ENCODE measurements at regions of chr13 and their contacts with region 1.

Region 1: DNA sequence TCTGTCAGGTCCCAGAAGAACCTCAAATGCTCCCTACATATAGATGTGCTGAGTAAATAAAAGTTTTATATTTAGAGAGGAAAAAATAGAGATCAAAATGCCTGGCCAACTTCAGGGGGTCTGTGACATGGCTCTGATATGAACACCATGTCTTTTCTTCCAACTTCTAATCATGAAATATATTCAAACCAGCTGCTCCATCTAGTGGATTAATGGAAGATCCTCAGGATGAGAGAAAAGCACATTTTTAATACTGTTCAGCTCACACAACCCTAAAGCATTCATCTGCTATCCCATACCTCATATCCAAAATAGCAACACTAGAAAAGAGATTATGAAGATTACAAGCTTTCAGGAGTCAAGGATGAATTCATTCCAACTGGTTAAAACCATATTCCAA is 56.0 kb upstream of the DOCK9 start:
- DNase-seq: peak in 1 of 2 experiments; percentile 30
- H3K4me3 ChIP-seq: no peak overlapping the region
- H3K4me3 Mint-ChIP-seq: peak overlapping the region; percentile 24
- H3K27ac Mint-ChIP-seq: peak overlapping the region; percentile 79
- H3K4me1 ChIP-seq: peaks cover 37% of the 10 kb centered on the region
- H3K4me1 Mint-ChIP-seq: peaks cover 29% of the 10 kb centered on the region
- H3K27me3 ChIP-seq: no peaks in the 10 kb centered on the region
- H3K27me3 Mint-ChIP-seq: no peaks in the 10 kb centered on the region
- CTCF ChIP-seq: peak; percentile 54 to 56

Region 2: DNA sequence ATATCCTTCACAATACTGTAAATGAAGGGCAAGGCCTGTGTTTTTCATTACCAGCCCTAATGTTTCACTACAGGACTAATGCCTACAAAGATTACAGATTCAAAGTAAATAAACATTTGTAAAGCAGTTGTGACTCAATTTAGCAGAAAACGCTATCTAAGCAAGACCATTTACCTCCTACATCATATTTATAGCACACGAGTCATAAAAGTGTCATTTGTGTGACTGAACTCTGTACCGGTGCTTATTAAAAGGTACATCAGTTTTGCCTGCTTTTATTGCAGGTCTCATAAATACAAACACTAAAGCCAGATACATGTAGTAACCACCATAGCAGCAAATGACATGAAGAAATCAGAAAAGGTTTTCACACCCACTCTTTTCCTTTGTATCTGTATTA is 219.8 kb before region 1 on chr13:
- CTCF ChIA-PET with region 1: no interaction called
- POLR2A ChIA-PET with region 1: no interaction called
- intact Hi-C with region 1: no loop called
- DNase-seq: no peak
- H3K4me3 ChIP-seq: no peak overlapping the region
- H3K4me3 Mint-ChIP-seq: no peak overlapping the region
- H3K27ac Mint-ChIP-seq: no peak overlapping the region
- H3K4me1 ChIP-seq: peaks cover 4% of the 10 kb centered on the region
- H3K4me1 Mint-ChIP-seq: no peaks in the 10 kb centered on the region
- H3K27me3 ChIP-seq: no peaks in the 10 kb centered on the region
- H3K27me3 Mint-ChIP-seq: no peaks in the 10 kb centered on the region
- CTCF ChIP-seq: no peak

Region 3: DNA sequence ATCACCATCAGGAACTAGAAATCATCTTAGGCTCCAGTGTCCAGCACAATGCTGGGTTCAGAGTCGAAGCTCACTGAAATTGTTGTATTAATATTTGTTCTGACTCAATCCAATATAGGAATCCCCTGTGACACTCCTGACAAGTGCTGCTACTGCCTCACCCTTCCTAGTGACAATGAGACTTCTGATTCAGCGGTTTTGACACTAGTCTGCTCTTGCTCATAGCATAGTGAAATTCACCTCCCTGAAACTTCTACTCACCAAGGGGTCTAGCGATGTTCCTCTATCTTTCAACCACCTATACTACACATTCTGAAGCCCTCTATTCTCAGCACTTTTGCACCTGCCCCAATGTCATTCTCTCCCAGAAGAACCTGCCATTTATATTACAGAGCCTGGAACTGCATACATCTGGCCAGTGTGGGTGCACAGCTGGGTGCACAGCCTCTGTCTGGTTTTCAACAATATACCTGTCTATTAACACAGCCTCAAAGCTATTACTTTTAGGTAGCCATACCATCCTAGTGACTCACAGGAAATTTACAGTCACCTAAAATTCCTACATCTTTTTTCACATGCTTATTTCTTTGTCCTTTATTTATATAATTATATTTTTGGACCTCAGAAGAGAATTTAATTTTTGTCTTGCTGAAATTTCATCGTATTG is 144.3 kb before region 1 on chr13:
- CTCF ChIA-PET with region 1: interaction called, 3 read pairs
- POLR2A ChIA-PET with region 1: no interaction called
- intact Hi-C with region 1: loop called (anchors 2 kb)
- DNase-seq: no peak
- H3K4me3 ChIP-seq: no peak overlapping the region
- H3K4me3 Mint-ChIP-seq: no peak overlapping the region
- H3K27ac Mint-ChIP-seq: no peak overlapping the region
- H3K4me1 ChIP-seq: no peaks in the 10 kb centered on the region
- H3K4me1 Mint-ChIP-seq: peaks cover 15% of the 10 kb centered on the region
- H3K27me3 ChIP-seq: no peaks in the 10 kb centered on the region
- H3K27me3 Mint-ChIP-seq: no peaks in the 10 kb centered on the region
- CTCF ChIP-seq: no peak

Region 4: DNA sequence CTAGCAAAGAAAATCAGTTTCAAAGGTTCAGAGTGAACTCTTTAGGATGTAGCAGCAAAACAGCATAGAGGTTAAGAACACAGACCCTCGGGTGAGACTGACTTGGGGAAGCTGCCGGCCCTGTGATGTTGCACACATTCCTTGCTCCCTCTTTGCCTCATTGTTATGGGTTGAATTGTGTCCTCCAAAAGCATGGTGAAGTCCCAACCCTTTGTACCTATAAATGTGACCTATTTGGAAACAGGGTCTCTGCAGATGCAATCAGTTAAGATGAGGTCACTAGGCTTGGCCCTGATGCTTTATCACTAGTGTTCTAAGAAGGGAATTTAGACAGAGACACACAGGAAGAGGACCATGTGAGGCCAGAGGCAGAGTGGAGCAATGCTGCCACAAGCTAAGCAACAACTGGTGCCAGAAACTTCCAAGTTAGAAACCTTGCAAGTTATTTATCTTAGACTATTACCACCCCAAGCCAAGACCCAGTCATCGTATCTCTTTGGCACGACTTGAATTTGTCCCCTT is 137.1 kb before region 1 on chr13:
- CTCF ChIA-PET with region 1: interaction called, 11 read pairs
- POLR2A ChIA-PET with region 1: no interaction called
- intact Hi-C with region 1: loop called (anchors 2 kb)
- DNase-seq: peak; percentile 47 to 57
- H3K4me3 ChIP-seq: no peak overlapping the region
- H3K4me3 Mint-ChIP-seq: peak overlapping the region; percentile 8
- H3K27ac Mint-ChIP-seq: peak overlapping the region; percentile 63
- H3K4me1 ChIP-seq: peaks cover 37% of the 10 kb centered on the region
- H3K4me1 Mint-ChIP-seq: peaks cover 28% of the 10 kb centered on the region
- H3K27me3 ChIP-seq: no peaks in the 10 kb centered on the region
- H3K27me3 Mint-ChIP-seq: no peaks in the 10 kb centered on the region
- CTCF ChIP-seq: no peak

Region 5: GRCh38 chr13:98927951-98928927 is 105.6 kb before region 1 on chr13:
- CTCF ChIA-PET with region 1: interaction called, 3 read pairs
- POLR2A ChIA-PET with region 1: no interaction called
- intact Hi-C with region 1: loop called (anchors 1 kb)
- DNase-seq: peak; percentile 89 to 91
- H3K4me3 ChIP-seq: no peak overlapping the region
- H3K4me3 Mint-ChIP-seq: peak overlapping the region; percentile 48
- H3K27ac Mint-ChIP-seq: peak overlapping the region; percentile 66
- H3K4me1 ChIP-seq: peaks cover 60% of the 10 kb centered on the region
- H3K4me1 Mint-ChIP-seq: peaks cover 39% of the 10 kb centered on the region
- H3K27me3 ChIP-seq: no peaks in the 10 kb centered on the region
- H3K27me3 Mint-ChIP-seq: no peaks in the 10 kb centered on the region
- CTCF ChIP-seq: no peak

Region 6: GRCh38 chr13:98977568-98978265 is 56.1 kb before region 1 on chr13 and contains the start of gene DOCK9:
- CTCF ChIA-PET with region 1: interaction called, 8 read pairs
- POLR2A ChIA-PET with region 1: no interaction called
- intact Hi-C with region 1: loop called (anchors 1 kb)
- DNase-seq: peak; percentile 63 to 68
- H3K4me3 ChIP-seq: peak within 1 kb of the TSS; percentile 11
- H3K4me3 Mint-ChIP-seq: peak within 1 kb of the TSS; percentile 77
- H3K27ac Mint-ChIP-seq: peak within 1 kb of the TSS; percentile 88
- H3K4me1 ChIP-seq: peaks cover 50% of the 10 kb centered on the region
- H3K4me1 Mint-ChIP-seq: peaks cover 49% of the 10 kb centered on the region
- H3K27me3 ChIP-seq: no peaks in the 10 kb centered on the region
- H3K27me3 Mint-ChIP-seq: no peaks in the 10 kb centered on the region
- CTCF ChIP-seq: no peak
- total RNA-seq, gene DOCK9: 219 and 260 TPM in 2 replicates

Region 7: DNA sequence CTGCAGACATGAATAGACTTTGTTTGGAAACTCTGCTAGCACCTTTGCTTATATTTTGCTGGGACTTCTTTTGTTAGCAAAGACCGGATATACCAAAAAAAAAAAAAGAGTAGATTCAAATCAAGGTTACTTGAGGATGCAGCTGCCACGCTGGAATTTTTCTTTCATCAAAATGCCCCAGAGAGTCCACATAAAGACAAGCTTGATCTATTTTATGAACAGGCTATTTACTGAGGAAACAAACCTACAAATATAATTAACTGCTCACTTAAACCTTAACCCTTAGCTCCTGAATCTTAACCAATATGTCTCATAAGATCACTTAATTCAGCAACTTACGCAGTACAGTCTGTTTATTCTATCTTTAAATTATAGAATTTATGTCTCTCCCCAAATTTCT is 28.8 kb before region 1 on chr13:
- CTCF ChIA-PET with region 1: no interaction called
- POLR2A ChIA-PET with region 1: no interaction called
- intact Hi-C with region 1: no loop called
- DNase-seq: no peak
- H3K4me3 ChIP-seq: no peak overlapping the region
- H3K4me3 Mint-ChIP-seq: no peak overlapping the region
- H3K27ac Mint-ChIP-seq: no peak overlapping the region
- H3K4me1 ChIP-seq: no peaks in the 10 kb centered on the region
- H3K4me1 Mint-ChIP-seq: peaks cover 24% of the 10 kb centered on the region
- H3K27me3 ChIP-seq: no peaks in the 10 kb centered on the region
- H3K27me3 Mint-ChIP-seq: no peaks in the 10 kb centered on the region
- CTCF ChIP-seq: no peak

Region 8: GRCh38 chr13:99057310-99057975 is 23.6 kb after region 1 on chr13:
- CTCF ChIA-PET with region 1: no interaction called
- POLR2A ChIA-PET with region 1: no interaction called
- intact Hi-C with region 1: no loop called
- DNase-seq: no peak
- H3K4me3 ChIP-seq: no peak overlapping the region
- H3K4me3 Mint-ChIP-seq: no peak overlapping the region
- H3K27ac Mint-ChIP-seq: no peak overlapping the region
- H3K4me1 ChIP-seq: peaks cover 19% of the 10 kb centered on the region
- H3K4me1 Mint-ChIP-seq: peaks cover 39% of the 10 kb centered on the region
- H3K27me3 ChIP-seq: no peaks in the 10 kb centered on the region
- H3K27me3 Mint-ChIP-seq: no peaks in the 10 kb centered on the region
- CTCF ChIP-seq: no peak

Region 9: DNA sequence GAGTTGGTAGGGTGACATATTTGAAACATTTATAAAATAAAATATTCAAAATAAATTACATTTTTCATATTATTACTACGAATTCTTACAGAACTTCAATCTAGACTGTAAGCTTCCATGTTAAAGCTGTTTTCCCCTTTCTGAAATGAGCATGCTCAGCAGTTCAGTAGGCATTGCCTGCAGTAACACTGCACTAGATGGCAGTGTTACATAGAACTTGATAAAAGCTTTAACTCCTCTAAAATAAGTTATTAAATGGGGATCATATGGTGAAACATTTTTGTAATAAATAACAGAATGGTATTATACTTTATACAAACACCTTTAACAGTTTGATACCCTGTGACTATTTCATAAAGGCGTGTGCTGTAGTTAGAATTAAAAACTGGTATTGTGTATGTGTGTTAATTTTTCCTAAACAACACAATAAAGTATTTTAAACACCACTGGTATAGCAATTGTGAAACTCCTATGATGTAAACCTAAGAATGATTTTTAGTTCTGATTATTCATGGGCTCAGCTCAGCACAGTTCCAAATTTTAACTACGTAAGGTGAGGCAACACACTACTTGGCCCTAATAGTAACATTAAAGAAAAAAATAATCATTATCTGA is 235.9 kb after region 1 on chr13:
- CTCF ChIA-PET with region 1: no interaction called
- POLR2A ChIA-PET with region 1: no interaction called
- intact Hi-C with region 1: loop called (anchors 5 kb)
- DNase-seq: peak in 1 of 2 experiments; percentile 15
- H3K4me3 ChIP-seq: no peak overlapping the region
- H3K4me3 Mint-ChIP-seq: no peak overlapping the region
- H3K27ac Mint-ChIP-seq: no peak overlapping the region
- H3K4me1 ChIP-seq: no peaks in the 10 kb centered on the region
- H3K4me1 Mint-ChIP-seq: no peaks in the 10 kb centered on the region
- H3K27me3 ChIP-seq: no peaks in the 10 kb centered on the region
- H3K27me3 Mint-ChIP-seq: no peaks in the 10 kb centered on the region
- CTCF ChIP-seq: peak in 1 of 2 experiments; percentile 58